PC-3 (cell line): ENCODE measurements at regions of chr6 and their contacts with region 1.

Region 1: GRCh38 chr6:45421709-45422502 is 44.2 kb upstream of the SUPT3H start:
- DNase-seq: peak; percentile 72
- ATAC-seq: peak; percentile 58
- H3K4me3 ChIP-seq: peak overlapping the region; percentile 93
- H3K27ac ChIP-seq: peak overlapping the region; percentile 73
- H3K4me1 ChIP-seq: peaks cover 33% of the 10 kb centered on the region
- H3K27me3 ChIP-seq: no peaks in the 10 kb centered on the region
- CTCF ChIP-seq: peak; percentile 37

Region 2: DNA sequence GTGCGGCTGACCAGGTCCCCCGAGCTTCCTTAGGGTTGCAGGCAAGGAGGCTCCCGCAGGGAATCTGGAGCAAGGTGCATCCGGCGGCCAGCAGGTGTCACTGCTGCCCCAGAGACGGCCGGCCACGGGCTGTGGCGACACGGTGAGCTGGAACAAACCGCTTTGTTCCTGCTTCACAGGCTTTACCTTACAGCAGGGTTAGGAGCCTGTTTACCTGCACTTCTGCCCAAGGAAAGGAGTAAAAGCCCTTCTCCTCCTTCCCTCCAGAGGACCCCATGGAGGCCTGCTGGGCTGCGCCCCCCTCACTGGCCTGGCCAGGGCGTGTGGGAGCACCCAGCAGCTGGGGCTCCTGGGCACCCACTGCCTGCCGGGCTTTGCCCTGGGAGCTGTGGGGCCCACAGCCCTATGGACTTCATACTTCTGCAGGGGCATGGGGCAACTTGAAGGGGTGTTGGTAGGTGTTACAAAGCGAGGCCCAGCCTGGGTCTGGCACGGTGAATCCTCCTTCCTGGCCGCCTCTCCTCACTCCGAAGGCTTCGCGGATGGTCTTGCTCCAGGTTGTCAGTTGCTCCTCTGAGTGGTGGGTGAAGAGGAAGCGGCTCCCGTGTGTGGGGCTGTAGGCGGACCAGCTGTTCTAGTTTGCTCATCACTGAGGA is 946.0 kb before region 1 on chr6:
- CTCF ChIA-PET with region 1: interaction called, 7 read pairs
- POLR2A ChIA-PET with region 1: no interaction called
- intact Hi-C with region 1: loop called (anchors 2 kb)
- DNase-seq: peak; percentile 90
- ATAC-seq: peak; percentile 87
- H3K4me3 ChIP-seq: peak overlapping the region; percentile 18; the same call in 1 of the 2 replicates
- H3K27ac ChIP-seq: no peak overlapping the region
- H3K4me1 ChIP-seq: peaks cover 23% of the 10 kb centered on the region
- H3K27me3 ChIP-seq: no peaks in the 10 kb centered on the region
- CTCF ChIP-seq: peak; percentile 93

Region 3: GRCh38 chr6:45086360-45087084 is 335.4 kb before region 1 on chr6:
- CTCF ChIA-PET with region 1: no interaction called
- POLR2A ChIA-PET with region 1: no interaction called
- intact Hi-C with region 1: loop called (anchors 2 kb)
- DNase-seq: peak; percentile 37
- ATAC-seq: no peak
- H3K4me3 ChIP-seq: no peak overlapping the region
- H3K27ac ChIP-seq: no peak overlapping the region
- H3K4me1 ChIP-seq: no peaks in the 10 kb centered on the region
- H3K27me3 ChIP-seq: no peaks in the 10 kb centered on the region
- CTCF ChIP-seq: 0 out of 2 replicates have a peak, but pooled peaks have one; percentile 19

Region 4: DNA sequence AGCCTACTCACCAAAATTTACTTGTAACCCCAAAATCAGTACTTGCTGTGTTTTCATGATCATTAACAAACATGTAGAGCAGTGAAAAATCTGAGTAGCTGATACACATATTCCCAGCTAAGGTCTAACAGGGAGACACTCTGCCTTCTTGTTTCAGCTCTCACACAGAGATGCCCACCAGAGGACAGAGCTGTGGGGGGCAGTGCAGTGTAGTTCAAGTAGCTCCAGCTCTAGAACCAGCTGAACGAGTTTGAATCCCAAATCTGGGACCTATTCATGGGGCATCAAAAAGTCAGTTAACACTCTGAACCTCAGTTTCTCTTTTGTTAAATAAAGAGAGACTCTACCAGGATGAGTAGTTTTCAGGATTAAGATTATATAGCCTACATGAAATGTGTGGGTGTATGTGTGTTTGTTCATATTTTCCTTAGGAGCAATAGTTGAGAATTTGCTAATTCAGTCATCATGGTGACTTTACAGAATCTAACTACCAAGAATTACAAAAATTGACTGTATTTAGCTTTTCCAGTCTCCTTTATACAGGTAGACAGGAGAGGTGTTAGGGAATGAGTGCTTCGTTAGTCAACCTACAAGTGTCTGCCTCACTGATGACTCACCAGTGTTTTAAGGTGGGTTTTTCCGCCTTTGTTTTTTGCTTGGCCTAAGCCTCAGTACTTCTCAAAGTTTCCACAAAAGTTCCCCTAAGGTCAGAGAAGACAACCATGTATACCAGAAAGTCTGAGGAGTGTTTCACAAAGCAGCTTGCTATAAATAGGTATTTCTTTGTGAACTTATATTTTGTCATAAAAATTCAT is 257.7 kb before region 1 on chr6:
- CTCF ChIA-PET with region 1: no interaction called
- POLR2A ChIA-PET with region 1: no interaction called
- intact Hi-C with region 1: no loop called
- DNase-seq: peak; percentile 14
- ATAC-seq: no peak
- H3K4me3 ChIP-seq: no peak overlapping the region
- H3K27ac ChIP-seq: no peak overlapping the region
- H3K4me1 ChIP-seq: peaks cover 4% of the 10 kb centered on the region; the same call in 1 of the 2 replicates
- H3K27me3 ChIP-seq: no peaks in the 10 kb centered on the region
- CTCF ChIP-seq: no peak

Region 5: GRCh38 chr6:45344900-45345299 is 77.0 kb before region 1 on chr6:
- CTCF ChIA-PET with region 1: no interaction called
- POLR2A ChIA-PET with region 1: no interaction called
- intact Hi-C with region 1: no loop called
- DNase-seq: no peak
- ATAC-seq: no peak
- H3K4me3 ChIP-seq: no peak overlapping the region
- H3K27ac ChIP-seq: no peak overlapping the region
- H3K4me1 ChIP-seq: no peaks in the 10 kb centered on the region
- H3K27me3 ChIP-seq: no peaks in the 10 kb centered on the region
- CTCF ChIP-seq: no peak

Region 6: GRCh38 chr6:45377554-45378333 is 44.2 kb before region 1 on chr6 and contains the start of gene SUPT3H:
- CTCF ChIA-PET with region 1: interaction called, 7 read pairs
- POLR2A ChIA-PET with region 1: interaction called, 3 read pairs
- intact Hi-C with region 1: loop called (anchors 2 kb)
- DNase-seq: peak; percentile 97
- ATAC-seq: peak; percentile 94
- H3K4me3 ChIP-seq: peak within 1 kb of the TSS; percentile 92
- H3K27ac ChIP-seq: peak within 1 kb of the TSS; percentile 90
- H3K4me1 ChIP-seq: peaks cover 19% of the 10 kb centered on the region
- H3K27me3 ChIP-seq: no peaks in the 10 kb centered on the region
- CTCF ChIP-seq: peak; percentile 31
- total RNA-seq, gene SUPT3H: 3.6 and 4.0 TPM in 2 replicates

Region 7: DNA sequence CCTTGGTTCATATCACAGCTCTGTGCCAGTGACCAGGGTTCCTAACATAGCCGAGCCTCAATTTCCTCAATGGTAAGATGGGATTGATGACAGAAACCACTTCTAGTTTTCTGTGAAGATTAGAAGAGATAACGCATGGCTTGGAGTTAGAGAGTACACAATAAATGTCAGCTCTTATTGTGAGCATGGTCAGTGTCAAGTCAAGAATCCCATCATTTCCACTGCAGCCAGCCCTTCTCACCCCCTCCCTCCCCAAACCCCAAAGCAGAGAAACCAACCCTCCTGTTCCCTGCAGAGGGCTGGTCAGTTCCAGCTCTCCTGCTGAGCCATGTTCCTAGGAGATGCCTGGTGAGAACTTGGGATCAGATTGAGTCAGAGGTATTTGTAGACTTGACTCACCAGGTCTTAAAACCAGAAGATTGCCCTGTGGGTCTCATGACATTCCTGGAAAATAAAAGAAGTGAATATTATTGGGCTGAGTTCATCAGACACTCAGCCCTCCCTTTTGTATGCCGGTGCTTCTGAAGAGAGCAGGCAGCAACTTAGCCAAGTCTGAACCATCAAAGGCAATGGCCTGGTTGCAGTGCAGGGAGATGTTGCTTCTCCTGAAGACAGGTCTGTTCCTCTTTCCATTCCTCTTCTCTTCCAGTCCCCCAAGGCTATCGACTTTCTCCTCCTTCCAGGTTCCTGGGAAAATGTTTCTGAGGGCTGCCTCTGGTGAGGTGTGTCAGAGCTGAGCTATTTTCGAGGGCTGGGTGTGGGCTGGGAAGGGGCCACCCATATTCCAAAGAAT is 233.9 kb after region 1 on chr6:
- CTCF ChIA-PET with region 1: no interaction called
- POLR2A ChIA-PET with region 1: no interaction called
- intact Hi-C with region 1: loop called (anchors 5 kb)
- DNase-seq: peak; percentile 98
- ATAC-seq: peak; percentile 91
- H3K4me3 ChIP-seq: peak overlapping the region; percentile 3; the same call in 1 of the 2 replicates
- H3K27ac ChIP-seq: peak overlapping the region; percentile 98
- H3K4me1 ChIP-seq: peaks cover 72% of the 10 kb centered on the region
- H3K27me3 ChIP-seq: no peaks in the 10 kb centered on the region
- CTCF ChIP-seq: no peak